ENCODE measurements at regions of chr1 and their contacts with region 1.

Region 1: GRCh38 chr1:201882665-201883132 is 6.0 kb upstream of the SHISA4 start:
- DNase-seq: peak in 1 of 4 donors; percentile 67
- ATAC-seq: peak; percentile 22
- H3K4me3 ChIP-seq: no peak overlapping the region
- H3K27ac ChIP-seq: peak overlapping the region in 1 of 2 donors; percentile 45
- H3K4me1 ChIP-seq: peaks cover 8 to 32% of the 10 kb centered on the region in 2 donors
- H3K27me3 ChIP-seq: peaks cover 0 to 16% of the 10 kb centered on the region in 2 donors
- CTCF ChIP-seq: no peak

Region 2: DNA sequence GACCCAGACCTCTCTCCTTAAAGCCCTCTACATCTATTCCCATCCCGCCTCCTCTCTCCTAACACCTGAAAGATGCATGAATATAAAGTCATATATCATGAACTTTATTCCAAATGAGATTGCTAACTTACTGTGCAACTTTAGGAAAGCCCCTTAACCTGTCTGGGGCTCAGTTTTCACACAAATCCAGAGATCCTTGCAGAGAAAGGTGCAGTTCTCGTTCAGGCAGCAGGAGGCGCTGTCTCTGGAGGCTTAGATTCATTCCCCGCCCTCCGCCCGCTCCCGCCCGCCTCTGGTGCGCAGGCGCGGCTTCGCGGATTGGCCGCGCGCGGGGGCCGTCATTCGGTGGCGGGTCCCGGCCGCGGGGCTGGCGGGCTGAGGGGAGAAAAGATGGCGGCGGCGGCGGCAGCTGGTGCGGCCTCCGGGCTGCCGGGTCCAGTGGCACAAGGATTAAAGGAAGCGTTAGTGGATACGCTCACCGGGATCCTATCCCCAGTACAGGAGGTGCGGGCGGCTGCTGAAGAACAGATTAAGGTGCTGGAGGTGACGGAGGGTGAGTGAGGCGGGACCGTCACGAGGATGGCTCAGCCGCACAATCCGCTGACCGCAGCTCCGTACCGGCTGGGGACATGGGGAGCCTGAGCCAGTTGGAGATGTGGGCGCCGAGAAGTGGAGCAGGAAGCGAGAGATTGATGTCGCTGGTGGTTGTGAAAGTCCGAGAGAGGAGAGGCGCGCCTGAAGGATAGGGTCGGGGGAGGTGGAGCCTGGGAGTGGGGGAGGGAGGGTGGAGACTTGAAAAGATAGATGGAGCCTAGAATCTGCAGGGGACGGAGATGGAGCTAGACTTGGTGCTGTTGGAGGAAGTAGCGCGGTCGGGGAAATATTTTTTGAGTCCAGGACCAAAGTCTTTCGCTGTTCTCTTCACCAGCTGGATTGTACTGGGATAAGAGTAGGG is 53.6 kb before region 1 on chr1 and contains the start of gene IPO9:
- intact Hi-C with region 1: no loop called
- DNase-seq: peak; percentile 90 to 97 (median 94)
- ATAC-seq: peak; percentile 98
- H3K4me3 ChIP-seq: peak within 1 kb of the TSS; percentile 65 to 91
- H3K27ac ChIP-seq: peak within 1 kb of the TSS; percentile 86 to 92
- H3K4me1 ChIP-seq: peaks cover 22 to 39% of the 10 kb centered on the region in 2 donors
- H3K27me3 ChIP-seq: no peaks in the 10 kb centered on the region
- CTCF ChIP-seq: peak; percentile 90 to 93
- polyA plus RNA-seq, gene IPO9: 73.1 to 94.0 (median 87.9) TPM

Region 3: GRCh38 chr1:201955009-201955728 is 72.5 kb after region 1 on chr1 and contains the start of gene TIMM17A:
- intact Hi-C with region 1: no loop called
- DNase-seq: peak; percentile 95 to 98 (median 97)
- ATAC-seq: peak; percentile 100
- H3K4me3 ChIP-seq: peak within 1 kb of the TSS; percentile 68 to 70
- H3K27ac ChIP-seq: peak within 1 kb of the TSS; percentile 78
- H3K4me1 ChIP-seq: peaks cover 6 to 12% of the 10 kb centered on the region in 2 donors
- H3K27me3 ChIP-seq: no peaks in the 10 kb centered on the region
- CTCF ChIP-seq: peak in 1 of 2 donors; percentile 7
- polyA plus RNA-seq, gene TIMM17A: 45.7 to 52.6 (median 50.1) TPM

Region 4: DNA sequence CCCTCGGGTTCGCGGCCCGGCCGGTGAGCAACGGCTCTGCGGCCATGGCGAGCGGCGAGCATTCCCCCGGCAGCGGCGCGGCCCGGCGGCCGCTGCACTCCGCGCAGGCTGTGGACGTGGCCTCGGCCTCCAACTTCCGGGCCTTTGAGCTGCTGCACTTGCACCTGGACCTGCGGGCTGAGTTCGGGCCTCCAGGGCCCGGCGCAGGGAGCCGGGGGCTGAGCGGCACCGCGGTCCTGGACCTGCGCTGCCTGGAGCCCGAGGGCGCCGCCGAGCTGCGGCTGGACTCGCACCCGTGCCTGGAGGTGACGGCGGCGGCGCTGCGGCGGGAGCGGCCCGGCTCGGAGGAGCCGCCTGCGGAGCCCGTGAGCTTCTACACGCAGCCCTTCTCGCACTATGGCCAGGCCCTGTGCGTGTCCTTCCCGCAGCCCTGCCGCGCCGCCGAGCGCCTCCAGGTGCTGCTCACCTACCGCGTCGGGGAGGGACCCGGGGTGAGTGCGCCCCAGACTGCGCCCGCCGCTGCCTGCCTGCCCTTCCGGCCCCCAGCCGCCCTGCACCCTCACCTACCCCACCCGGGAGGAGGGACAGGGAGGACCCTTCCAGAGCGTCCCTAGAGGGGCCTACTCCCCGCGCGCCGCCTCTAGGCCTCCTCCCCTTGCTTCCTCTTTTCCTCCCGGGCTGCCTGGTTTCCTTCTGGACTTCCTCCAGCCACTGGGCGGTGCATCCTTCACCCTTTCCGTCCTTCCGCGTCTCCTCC is 100.1 kb after region 1 on chr1 and contains the start of gene RNPEP:
- intact Hi-C with region 1: loop called (anchors 5 to 10 kb)
- DNase-seq: peak; percentile 67 to 90 (median 79)
- ATAC-seq: peak; percentile 90
- H3K4me3 ChIP-seq: peak within 1 kb of the TSS; percentile 95 to 96
- H3K27ac ChIP-seq: peak within 1 kb of the TSS; percentile 97
- H3K4me1 ChIP-seq: peaks cover 0 to 24% of the 10 kb centered on the region in 2 donors
- H3K27me3 ChIP-seq: no peaks in the 10 kb centered on the region
- CTCF ChIP-seq: peak; percentile 12 to 48
- polyA plus RNA-seq, gene RNPEP: 56.0 to 74.1 (median 64.1) TPM

Region 5: DNA sequence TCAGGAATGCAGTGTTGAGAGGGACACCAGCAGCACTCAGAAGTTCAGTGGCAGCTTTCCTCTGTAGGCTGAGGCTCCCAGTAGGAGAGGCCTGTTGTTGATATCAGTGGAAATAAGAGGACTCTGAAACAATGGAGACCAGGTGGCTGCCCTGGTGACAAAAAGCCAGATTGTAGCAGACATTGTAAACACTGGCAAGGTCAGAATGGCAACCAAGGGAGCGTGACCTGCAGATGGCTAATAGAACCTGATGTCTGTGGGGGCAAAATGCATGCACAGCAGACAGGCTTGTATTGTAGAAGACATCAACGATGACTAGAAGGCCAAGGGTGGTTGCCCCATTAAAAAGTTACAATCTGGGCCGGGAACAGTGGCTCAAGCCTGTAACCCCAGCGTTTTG is 187.0 kb after region 1 on chr1:
- intact Hi-C with region 1: no loop called
- DNase-seq: no peak
- ATAC-seq: no peak
- H3K4me3 ChIP-seq: no peak overlapping the region
- H3K27ac ChIP-seq: no peak overlapping the region
- H3K4me1 ChIP-seq: no peaks in the 10 kb centered on the region
- H3K27me3 ChIP-seq: no peaks in the 10 kb centered on the region
- CTCF ChIP-seq: no peak